ENCODE measurements at regions of chr1 and their contacts with region 1.

Region 1: GRCh38 chr1:55987491-55988249 is 591.7 kb downstream of the PLPP3 start:
- DNase-seq: no peak
- H3K4me3 ChIP-seq: no peak overlapping the region
- H3K27ac ChIP-seq: no peak overlapping the region
- H3K4me1 ChIP-seq: no peaks in the 10 kb centered on the region
- H3K27me3 ChIP-seq: no peaks in the 10 kb centered on the region
- CTCF ChIP-seq: no peak
- POLR2A ChIP-seq: no peak

Region 2: GRCh38 chr1:56064705-56065104 is 77.0 kb after region 1 on chr1:
- intact Hi-C with region 1: loop called (anchors 5 kb)
- DNase-seq: no peak
- H3K4me3 ChIP-seq: no peak overlapping the region
- H3K27ac ChIP-seq: no peak overlapping the region
- H3K4me1 ChIP-seq: no peaks in the 10 kb centered on the region
- H3K27me3 ChIP-seq: no peaks in the 10 kb centered on the region
- CTCF ChIP-seq: no peak
- POLR2A ChIP-seq: no peak

Region 3: GRCh38 chr1:56146449-56146848 is 158.8 kb after region 1 on chr1:
- intact Hi-C with region 1: loop called (anchors 5 kb)
- DNase-seq: peak; percentile 22
- H3K4me3 ChIP-seq: no peak overlapping the region
- H3K27ac ChIP-seq: peak overlapping the region; percentile 34 to 35
- H3K4me1 ChIP-seq: no peaks in the 10 kb centered on the region
- H3K27me3 ChIP-seq: no peaks in the 10 kb centered on the region
- CTCF ChIP-seq: no peak
- POLR2A ChIP-seq: no peak

Region 4: GRCh38 chr1:56376188-56376984 is 388.7 kb after region 1 on chr1:
- intact Hi-C with region 1: loop called (anchors 10 kb)
- DNase-seq: peak; percentile 66
- H3K4me3 ChIP-seq: no peak overlapping the region
- H3K27ac ChIP-seq: peak overlapping the region; percentile 35 to 39
- H3K4me1 ChIP-seq: peaks cover 3% of the 10 kb centered on the region
- H3K27me3 ChIP-seq: no peaks in the 10 kb centered on the region
- CTCF ChIP-seq: no peak
- POLR2A ChIP-seq: no peak

Measured in prostate gland (tissue), 2 donors.